Breast epithelium (tissue), 4 donors: ENCODE measurements at regions of chr1 and their contacts with region 1.

Region 1: DNA sequence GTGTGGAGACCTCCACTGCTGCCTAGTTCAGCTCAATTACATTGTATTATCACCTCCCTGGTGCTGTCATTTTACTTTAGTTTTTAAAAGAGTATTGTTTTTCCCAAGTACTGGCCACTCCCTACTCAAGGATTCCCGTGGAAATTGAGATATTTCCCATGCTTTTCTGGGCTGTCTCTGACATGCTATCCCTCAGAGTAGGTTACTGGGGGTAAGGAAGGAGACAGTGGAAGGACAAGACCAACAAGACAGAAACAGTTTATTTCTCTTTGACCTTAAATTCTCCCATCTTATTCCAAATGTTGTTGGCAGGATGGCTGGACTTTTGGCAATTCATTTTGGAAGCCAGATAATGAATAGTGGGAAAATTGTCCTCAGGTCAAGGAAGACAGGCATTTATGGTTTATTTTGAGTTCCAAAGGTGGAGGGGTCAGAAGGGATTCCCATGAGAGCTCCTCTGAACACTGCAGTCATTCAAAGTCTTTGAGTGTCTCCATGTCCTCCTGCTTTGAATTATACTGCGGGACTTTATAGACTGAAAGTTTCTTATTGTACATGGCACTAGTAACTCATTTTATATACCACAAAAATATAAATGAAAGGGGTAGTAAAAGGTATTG is 20.3 kb downstream of the RGS5 start:
- DNase-seq: no peak
- H3K4me3 ChIP-seq: no peak overlapping the region
- H3K27ac ChIP-seq: no peak overlapping the region
- H3K4me1 ChIP-seq: no peaks in the 10 kb centered on the region
- H3K27me3 ChIP-seq: no peaks in the 10 kb centered on the region
- CTCF ChIP-seq: no peak
- POLR2A ChIP-seq: no peak

Region 2: DNA sequence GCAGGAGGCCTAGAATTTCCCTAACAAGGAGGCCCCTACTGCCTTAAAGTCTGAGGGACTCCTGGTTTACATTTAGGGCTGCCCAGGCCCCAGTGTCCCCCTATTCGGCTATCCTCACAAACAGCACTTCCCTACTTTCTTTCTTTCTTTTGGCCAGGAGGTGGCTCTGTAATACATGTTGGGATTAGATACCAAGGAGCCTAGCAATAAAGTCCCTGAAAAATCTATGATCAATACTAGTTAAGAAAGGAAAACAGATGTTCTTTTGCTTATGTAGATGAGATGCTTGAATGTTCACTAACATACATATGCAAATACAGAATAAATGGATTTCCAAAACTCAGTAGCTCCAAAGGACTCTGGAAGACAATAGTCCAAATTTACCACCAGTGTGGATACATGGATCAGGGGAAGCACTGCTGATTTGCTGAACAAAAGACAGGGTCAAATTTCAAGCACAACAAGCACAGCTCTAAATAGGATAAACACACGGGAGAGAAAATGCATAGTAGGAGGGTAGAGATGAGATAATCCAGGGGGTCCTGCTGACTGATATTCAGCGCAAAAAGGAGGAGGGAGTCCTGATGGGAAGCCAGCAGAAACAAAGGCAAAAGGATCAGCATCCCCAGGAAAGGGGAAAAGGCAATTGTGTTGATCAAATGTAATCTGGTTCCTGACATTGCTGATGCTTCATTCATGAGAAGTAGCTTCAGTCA is 379.3 kb after region 1 on chr1:
- intact Hi-C with region 1: no loop called
- DNase-seq: no peak
- H3K4me3 ChIP-seq: no peak overlapping the region
- H3K27ac ChIP-seq: no peak overlapping the region
- H3K4me1 ChIP-seq: no peaks in the 10 kb centered on the region
- H3K27me3 ChIP-seq: no peaks in the 10 kb centered on the region
- CTCF ChIP-seq: peak in 1 of 3 donors; percentile 39
- POLR2A ChIP-seq: no peak

Region 3: DNA sequence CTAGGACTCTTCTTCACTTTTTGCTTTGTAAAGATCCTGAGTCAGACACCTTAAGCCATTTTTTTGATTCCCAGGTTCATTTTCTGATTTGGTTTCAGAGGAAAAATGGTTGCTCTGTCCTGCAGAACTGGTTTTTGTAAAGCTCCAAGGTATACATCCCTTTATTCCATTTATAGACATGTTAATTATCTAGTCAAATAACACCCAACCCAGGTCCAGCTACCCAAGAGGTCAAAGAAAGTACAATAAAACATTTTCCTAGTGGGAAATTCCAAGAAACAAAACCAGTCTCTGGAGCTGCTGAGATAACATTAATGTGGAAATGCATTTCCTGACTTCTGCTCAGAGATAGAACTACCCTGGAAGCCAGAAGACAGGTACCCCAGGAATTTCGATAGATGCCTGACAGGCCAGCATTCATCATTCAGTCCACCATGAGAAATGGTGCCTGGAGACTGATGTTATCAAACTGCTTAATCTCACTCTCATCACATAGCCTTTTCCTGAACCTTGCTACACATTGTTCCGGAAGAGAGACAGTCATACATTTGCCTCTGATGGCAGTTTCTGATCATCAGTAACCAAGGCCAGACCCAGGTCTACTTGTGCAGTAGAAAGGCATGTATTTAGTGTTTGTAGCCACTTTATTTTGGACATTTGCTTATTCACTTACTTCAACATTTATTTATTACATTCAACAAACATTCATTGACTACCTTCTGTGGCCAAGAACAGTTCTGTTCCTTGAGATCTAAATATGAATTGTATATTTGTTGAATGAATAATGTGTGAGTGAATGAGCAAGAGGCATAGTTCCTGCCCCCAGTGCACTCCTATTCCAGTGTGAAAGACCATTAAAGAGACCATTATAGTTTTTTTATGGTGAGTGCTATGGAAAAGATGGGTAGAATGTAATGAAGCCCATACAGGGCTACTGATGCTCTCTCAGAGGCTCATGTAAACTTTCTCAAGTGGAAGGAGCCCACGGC is 624.9 kb after region 1 on chr1:
- intact Hi-C with region 1: no loop called
- DNase-seq: no peak
- H3K4me3 ChIP-seq: no peak overlapping the region
- H3K27ac ChIP-seq: no peak overlapping the region
- H3K4me1 ChIP-seq: no peaks in the 10 kb centered on the region
- H3K27me3 ChIP-seq: no peaks in the 10 kb centered on the region
- CTCF ChIP-seq: no peak
- POLR2A ChIP-seq: no peak

Region 4: DNA sequence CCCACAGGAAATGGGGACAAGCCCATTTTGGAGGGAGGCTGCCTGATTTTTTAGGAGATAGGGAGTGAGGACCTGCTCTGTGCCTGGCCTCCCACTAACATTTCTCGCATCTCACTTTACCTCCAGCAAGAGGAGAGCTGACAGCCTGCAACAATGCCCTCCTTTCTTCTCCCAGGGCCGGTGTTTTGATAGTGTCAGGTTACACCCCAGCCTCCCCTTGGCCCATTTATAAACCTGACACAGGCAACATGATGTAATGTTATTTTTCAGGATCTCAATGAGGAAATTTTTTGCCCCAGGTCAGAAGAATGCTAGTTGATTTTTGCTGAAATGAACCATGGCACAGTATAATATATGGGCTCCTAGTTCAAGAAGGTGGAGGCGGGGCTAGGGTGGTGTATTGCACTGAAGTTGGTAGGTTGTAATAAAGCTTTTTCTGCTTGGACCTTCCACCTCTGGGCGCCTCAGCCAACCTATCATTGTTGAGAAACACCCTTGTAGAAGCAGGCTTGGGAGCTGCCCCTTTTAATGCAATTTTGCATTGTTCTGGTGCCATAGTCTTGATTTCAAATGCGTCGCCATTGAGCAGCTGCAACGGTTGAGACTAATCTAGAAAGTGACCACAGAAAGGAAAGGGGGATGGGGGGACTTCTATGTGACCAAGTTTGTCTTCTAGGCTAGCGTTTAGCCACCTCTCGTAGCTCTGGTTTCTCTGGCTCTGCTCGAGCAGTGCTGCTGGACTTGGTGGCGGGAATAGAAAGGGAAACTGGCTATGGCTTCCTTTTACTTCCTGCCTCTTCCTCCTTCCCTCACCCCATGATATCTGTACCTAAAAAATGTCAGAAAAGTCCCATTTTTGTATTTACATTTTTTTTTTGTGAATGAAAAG is 1429.6 kb after region 1 on chr1:
- intact Hi-C with region 1: loop called (anchors 5 kb)
- DNase-seq: peak; percentile 64 to 82
- H3K4me3 ChIP-seq: peak overlapping the region in 1 of 3 donors; percentile 15
- H3K27ac ChIP-seq: peak overlapping the region; percentile 41 to 80
- H3K4me1 ChIP-seq: peaks cover 0 to 19% of the 10 kb centered on the region in 2 donors
- H3K27me3 ChIP-seq: no peaks in the 10 kb centered on the region
- CTCF ChIP-seq: no peak
- POLR2A ChIP-seq: no peak